ENCODE measurements at regions of chr6 and their contacts with region 1.

Region 1: GRCh38 chr6:133891149-133891926 is 2.4 kb downstream of the TCF21 start:
- DNase-seq: peak; percentile 43
- ATAC-seq: peak; percentile 42
- H3K4me3 Mint-ChIP-seq: peak overlapping the region; percentile 63
- H3K27ac Mint-ChIP-seq: no peak overlapping the region
- H3K4me1 Mint-ChIP-seq: peaks cover 41% of the 10 kb centered on the region
- H3K27me3 Mint-ChIP-seq: peaks cover 76% of the 10 kb centered on the region

Region 2: DNA sequence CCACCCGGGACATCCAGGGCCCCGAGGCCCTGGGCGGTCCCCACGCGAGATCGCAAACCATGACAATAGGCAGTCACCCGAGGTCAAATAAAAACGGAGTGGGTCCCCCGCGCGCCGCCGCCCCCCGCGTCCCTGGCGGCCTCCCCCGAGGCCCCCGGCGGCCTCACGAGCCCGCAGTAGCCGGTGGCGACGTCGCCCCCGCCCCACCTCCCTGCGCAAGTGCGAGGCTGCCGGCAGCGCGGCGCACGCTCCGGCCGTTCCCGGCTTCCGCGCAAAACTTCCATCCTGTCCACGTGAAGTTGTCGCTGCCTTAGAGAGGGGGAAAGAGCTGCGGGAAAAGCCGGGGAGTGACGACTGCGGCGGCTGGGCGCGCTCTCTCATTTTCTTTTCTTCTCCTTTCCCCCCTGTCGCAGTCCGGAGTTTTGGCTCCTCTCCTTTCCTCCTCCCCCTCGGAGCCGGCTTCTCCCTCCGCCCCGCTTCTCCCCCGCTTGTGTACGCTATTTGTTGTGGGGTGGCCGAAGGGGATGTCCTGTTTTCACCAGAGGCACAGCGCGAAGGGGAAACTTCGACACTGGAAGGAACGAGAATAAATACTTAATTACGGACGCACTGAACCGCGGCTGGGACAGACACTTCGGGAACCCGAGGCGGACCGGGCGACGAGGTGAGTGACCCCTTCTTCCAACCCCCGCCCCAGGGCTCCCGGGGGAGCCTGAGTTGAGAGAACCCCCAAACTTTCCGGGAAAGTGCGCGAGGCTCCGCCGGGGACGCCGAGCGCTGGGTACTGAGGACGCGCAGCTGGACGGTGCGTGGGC is 650.0 kb before region 1 on chr6 and contains the start of gene EYA4:
- CTCF ChIA-PET with region 1: no interaction called
- POLR2A ChIA-PET with region 1: no interaction called
- intact Hi-C with region 1: loop called (anchors 5 kb)
- DNase-seq: no peak
- ATAC-seq: no peak
- H3K4me3 Mint-ChIP-seq: no peak within 1 kb of the TSS
- H3K27ac Mint-ChIP-seq: no peak within 1 kb of the TSS
- H3K4me1 Mint-ChIP-seq: peaks cover 10% of the 10 kb centered on the region
- H3K27me3 Mint-ChIP-seq: peaks cover 40% of the 10 kb centered on the region
- total RNA-seq, gene EYA4: not detected

Region 3: GRCh38 chr6:133854364-133855275 is 36.7 kb before region 1 on chr6:
- CTCF ChIA-PET with region 1: no interaction called
- POLR2A ChIA-PET with region 1: no interaction called
- intact Hi-C with region 1: loop called (anchors 2 to 5 kb)
- DNase-seq: peak; percentile 17
- ATAC-seq: no peak
- H3K4me3 Mint-ChIP-seq: no peak overlapping the region
- H3K27ac Mint-ChIP-seq: no peak overlapping the region
- H3K4me1 Mint-ChIP-seq: peaks cover 11% of the 10 kb centered on the region
- H3K27me3 Mint-ChIP-seq: peaks cover 51% of the 10 kb centered on the region

Region 4: GRCh38 chr6:135251964-135252429 is 1360.7 kb after region 1 on chr6:
- CTCF ChIA-PET with region 1: no interaction called
- POLR2A ChIA-PET with region 1: no interaction called
- intact Hi-C with region 1: no loop called
- DNase-seq: peak; percentile 54
- ATAC-seq: peak; percentile 91
- H3K4me3 Mint-ChIP-seq: no peak overlapping the region
- H3K27ac Mint-ChIP-seq: no peak overlapping the region
- H3K4me1 Mint-ChIP-seq: peaks cover 3% of the 10 kb centered on the region
- H3K27me3 Mint-ChIP-seq: no peaks in the 10 kb centered on the region

Measured in activated CD4-positive, alpha-beta T cell treated with anti-CD3 and anti-CD28 coated beads for 36 hours (primary cell).